Caco-2 (cell line): ENCODE measurements at regions of chr5 and their contacts with region 1.

Region 1: GRCh38 chr5:110757118-110757729 is 18.4 kb downstream of the SLC25A46 start:
- DNase-seq: peak in 1 of 2 experiments; percentile 46
- H3K4me3 ChIP-seq: no peak overlapping the region
- H3K4me3 Mint-ChIP-seq: no peak overlapping the region
- H3K27ac Mint-ChIP-seq: no peak overlapping the region
- H3K4me1 ChIP-seq: no peaks in the 10 kb centered on the region
- H3K4me1 Mint-ChIP-seq: no peaks in the 10 kb centered on the region
- H3K27me3 ChIP-seq: no peaks in the 10 kb centered on the region
- H3K27me3 Mint-ChIP-seq: no peaks in the 10 kb centered on the region
- CTCF ChIP-seq: peak; percentile 52 to 59

Region 2: GRCh38 chr5:110807169-110807568 is 49.9 kb after region 1 on chr5:
- CTCF ChIA-PET with region 1: no interaction called
- POLR2A ChIA-PET with region 1: no interaction called
- intact Hi-C with region 1: no loop called
- DNase-seq: no peak
- H3K4me3 ChIP-seq: no peak overlapping the region
- H3K4me3 Mint-ChIP-seq: no peak overlapping the region
- H3K27ac Mint-ChIP-seq: no peak overlapping the region
- H3K4me1 ChIP-seq: no peaks in the 10 kb centered on the region
- H3K4me1 Mint-ChIP-seq: no peaks in the 10 kb centered on the region
- H3K27me3 ChIP-seq: no peaks in the 10 kb centered on the region
- H3K27me3 Mint-ChIP-seq: no peaks in the 10 kb centered on the region
- CTCF ChIP-seq: no peak

Region 3: DNA sequence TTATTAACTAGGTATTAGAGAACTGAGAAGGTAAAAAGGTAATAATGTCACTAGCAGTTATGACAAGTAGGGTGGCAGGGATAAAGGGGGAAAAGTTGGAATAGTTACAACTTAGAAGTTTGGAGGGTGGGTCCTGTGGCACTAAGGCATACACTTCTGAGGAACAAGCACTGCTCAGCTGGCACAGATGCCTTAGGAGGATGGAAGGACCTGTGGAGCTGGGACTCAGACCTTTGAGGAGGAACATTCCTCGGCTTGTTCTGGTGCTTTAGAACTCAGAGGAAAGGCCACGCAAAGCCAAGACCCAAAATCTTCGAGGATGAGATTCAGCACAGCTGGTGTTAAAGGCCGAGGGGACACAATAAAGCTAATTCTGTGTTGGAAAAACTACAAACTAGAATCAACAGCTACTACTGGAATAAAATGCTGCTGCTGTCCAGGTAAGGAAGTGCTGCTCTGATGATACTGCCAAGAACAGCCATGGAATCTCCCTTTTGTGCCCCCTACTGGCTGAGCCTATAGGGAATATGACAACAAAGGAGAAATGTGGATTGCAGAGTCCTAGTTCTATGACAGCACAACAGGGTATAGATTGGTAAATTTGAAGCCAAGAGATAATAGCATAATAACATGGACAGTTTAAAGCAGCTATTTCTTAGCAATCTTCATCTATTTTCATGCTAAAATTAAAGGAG is 108.3 kb after region 1 on chr5:
- CTCF ChIA-PET with region 1: no interaction called
- POLR2A ChIA-PET with region 1: no interaction called
- intact Hi-C with region 1: loop called (anchors 1 kb)
- DNase-seq: peak; percentile 36 to 56
- H3K4me3 ChIP-seq: no peak overlapping the region
- H3K4me3 Mint-ChIP-seq: no peak overlapping the region
- H3K27ac Mint-ChIP-seq: no peak overlapping the region
- H3K4me1 ChIP-seq: no peaks in the 10 kb centered on the region
- H3K4me1 Mint-ChIP-seq: no peaks in the 10 kb centered on the region
- H3K27me3 ChIP-seq: no peaks in the 10 kb centered on the region
- H3K27me3 Mint-ChIP-seq: peaks cover 17% of the 10 kb centered on the region
- CTCF ChIP-seq: peak; percentile 53 to 68

Region 4: GRCh38 chr5:111016801-111017200 is 259.6 kb after region 1 on chr5:
- CTCF ChIA-PET with region 1: no interaction called
- POLR2A ChIA-PET with region 1: no interaction called
- intact Hi-C with region 1: no loop called
- DNase-seq: no peak
- H3K4me3 ChIP-seq: no peak overlapping the region
- H3K4me3 Mint-ChIP-seq: no peak overlapping the region
- H3K27ac Mint-ChIP-seq: no peak overlapping the region
- H3K4me1 ChIP-seq: no peaks in the 10 kb centered on the region
- H3K4me1 Mint-ChIP-seq: no peaks in the 10 kb centered on the region
- H3K27me3 ChIP-seq: no peaks in the 10 kb centered on the region
- H3K27me3 Mint-ChIP-seq: peaks cover 5% of the 10 kb centered on the region
- CTCF ChIP-seq: no peak

Region 5: GRCh38 chr5:111063700-111064322 is 306.6 kb after region 1 on chr5:
- CTCF ChIA-PET with region 1: no interaction called
- POLR2A ChIA-PET with region 1: no interaction called
- intact Hi-C with region 1: loop called (anchors 1 kb)
- DNase-seq: peak in 1 of 2 experiments; percentile 24
- H3K4me3 ChIP-seq: no peak overlapping the region
- H3K4me3 Mint-ChIP-seq: no peak overlapping the region
- H3K27ac Mint-ChIP-seq: no peak overlapping the region
- H3K4me1 ChIP-seq: no peaks in the 10 kb centered on the region
- H3K4me1 Mint-ChIP-seq: no peaks in the 10 kb centered on the region
- H3K27me3 ChIP-seq: no peaks in the 10 kb centered on the region
- H3K27me3 Mint-ChIP-seq: peaks cover 27% of the 10 kb centered on the region
- CTCF ChIP-seq: peak; percentile 65 to 72

Region 6: GRCh38 chr5:111278845-111279504 is 521.8 kb after region 1 on chr5:
- CTCF ChIA-PET with region 1: no interaction called
- POLR2A ChIA-PET with region 1: no interaction called
- intact Hi-C with region 1: loop called (anchors 1 kb)
- DNase-seq: peak; percentile 60 to 78
- H3K4me3 ChIP-seq: no peak overlapping the region
- H3K4me3 Mint-ChIP-seq: no peak overlapping the region
- H3K27ac Mint-ChIP-seq: no peak overlapping the region
- H3K4me1 ChIP-seq: no peaks in the 10 kb centered on the region
- H3K4me1 Mint-ChIP-seq: no peaks in the 10 kb centered on the region
- H3K27me3 ChIP-seq: no peaks in the 10 kb centered on the region
- H3K27me3 Mint-ChIP-seq: peaks cover 3% of the 10 kb centered on the region
- CTCF ChIP-seq: peak; percentile 84 to 87